ENCODE measurements at regions of chr6 and their contacts with region 1.

Region 1: DNA sequence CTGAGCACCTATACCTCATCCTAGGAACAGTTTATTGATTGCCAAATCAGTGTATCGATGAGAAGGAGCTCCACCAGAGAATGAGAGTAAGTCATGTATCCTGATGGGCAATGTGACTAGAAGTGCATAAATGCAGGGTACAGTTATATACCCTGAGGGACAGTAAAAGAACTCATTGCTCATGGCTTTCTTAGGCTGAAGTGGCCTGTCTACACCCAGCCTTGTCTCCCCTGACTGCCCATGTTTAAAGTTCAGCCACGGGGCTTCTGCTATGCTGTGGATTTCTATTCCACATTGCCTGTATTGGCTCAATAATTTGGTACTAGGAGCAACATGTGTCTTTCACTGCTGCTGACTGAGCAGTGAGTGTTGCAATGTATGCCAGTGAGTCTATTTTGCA is 400.4 kb upstream of the IMPG1 start:
- DNase-seq: no peak
- ATAC-seq: no peak
- H3K4me3 ChIP-seq: no peak overlapping the region
- H3K27ac ChIP-seq: no peak overlapping the region
- H3K4me1 ChIP-seq: no peaks in the 10 kb centered on the region
- H3K27me3 ChIP-seq: no peaks in the 10 kb centered on the region
- CTCF ChIP-seq: no peak

Region 2: GRCh38 chr6:76420094-76420493 is 52.8 kb before region 1 on chr6:
- intact Hi-C with region 1: loop called in 1 of 2 experiments (anchors 2 kb)
- DNase-seq: no peak
- ATAC-seq: no peak
- H3K4me3 ChIP-seq: no peak overlapping the region
- H3K27ac ChIP-seq: no peak overlapping the region
- H3K4me1 ChIP-seq: no peaks in the 10 kb centered on the region
- H3K27me3 ChIP-seq: no peaks in the 10 kb centered on the region
- CTCF ChIP-seq: no peak